ENCODE measurements at regions of chr17 and their contacts with region 1.

Region 1: DNA sequence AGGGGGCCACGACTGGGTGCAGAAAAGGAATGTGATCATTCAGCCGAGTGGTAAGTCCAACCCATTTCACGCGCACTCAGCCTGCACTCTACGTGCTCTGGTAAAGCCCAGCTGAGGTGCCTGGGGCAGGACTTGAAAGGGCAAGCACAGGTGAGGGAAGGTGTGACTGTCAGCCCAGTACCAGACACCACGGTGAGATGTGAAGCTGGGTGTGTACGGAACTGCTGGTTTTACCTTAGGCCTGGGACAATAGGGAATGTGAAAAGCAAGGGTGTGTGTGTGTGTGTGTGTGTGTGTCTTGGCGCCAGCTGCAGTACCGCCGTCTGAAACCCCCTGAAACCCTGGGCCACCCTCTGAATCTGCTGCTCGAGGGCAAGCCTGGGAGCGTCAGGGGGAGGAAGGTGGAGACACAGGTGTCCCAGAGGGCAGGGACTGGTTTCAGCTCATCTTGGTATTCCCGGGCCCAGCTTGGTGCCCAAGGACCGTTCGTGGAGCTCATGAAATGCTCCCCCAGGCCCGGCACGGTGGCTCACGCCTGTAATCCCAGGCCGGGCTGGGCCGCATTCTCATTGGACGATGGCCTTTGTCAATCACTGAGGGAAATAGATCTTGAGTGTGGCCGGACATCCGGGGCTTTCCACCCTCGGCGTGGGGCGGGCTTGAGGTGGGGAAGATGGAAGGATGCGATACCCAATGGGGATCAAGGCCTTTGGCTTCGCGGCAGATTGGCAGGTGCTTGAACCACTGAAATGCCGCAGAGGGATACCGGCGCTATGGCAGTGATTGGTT is 27.8 kb upstream of the ST6GALNAC1 start:
- DNase-seq: peak; percentile 100
- H3K4me3 ChIP-seq: peak overlapping the region; percentile 75
- H3K27ac ChIP-seq: peak overlapping the region; percentile 93
- H3K4me1 ChIP-seq: peaks cover 26% of the 10 kb centered on the region
- H3K27me3 ChIP-seq: no peaks in the 10 kb centered on the region
- CTCF ChIP-seq: no peak

Region 2: GRCh38 chr17:76700617-76701470 is 29.5 kb after region 1 on chr17:
- intact Hi-C with region 1: no loop called
- DNase-seq: peak; percentile 76
- H3K4me3 ChIP-seq: peak overlapping the region; percentile 57
- H3K27ac ChIP-seq: peak overlapping the region; percentile 98
- H3K4me1 ChIP-seq: peaks cover 96% of the 10 kb centered on the region
- H3K27me3 ChIP-seq: no peaks in the 10 kb centered on the region
- CTCF ChIP-seq: no peak

Region 3: DNA sequence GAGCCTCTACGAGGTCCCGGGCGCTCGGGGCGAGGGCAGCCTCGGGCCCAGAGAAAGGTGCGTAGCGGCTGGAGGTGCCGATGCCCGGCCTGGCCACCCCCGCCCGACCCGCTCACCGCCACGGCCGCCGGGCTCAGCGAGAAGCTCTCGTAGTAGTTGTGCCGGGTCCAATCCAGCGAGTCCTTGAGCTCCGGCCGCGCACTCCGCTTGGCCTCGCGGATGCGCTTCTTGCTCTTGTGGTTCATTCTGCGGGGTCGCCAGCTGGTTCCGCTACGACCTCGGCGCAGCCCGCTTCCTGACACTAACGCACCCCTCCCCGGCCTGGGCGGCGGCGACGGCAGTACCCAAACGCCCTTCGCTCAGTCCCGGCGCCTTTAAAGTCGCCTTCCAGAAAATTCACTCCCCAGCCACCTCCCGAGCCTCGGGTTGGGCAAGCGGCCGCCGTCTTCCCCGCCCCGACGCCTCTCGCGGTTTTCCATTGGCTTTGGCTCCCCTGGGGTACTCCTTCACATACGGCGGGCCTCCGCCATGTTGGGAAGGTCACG is 55.0 kb after region 1 on chr17 and contains the start of gene JMJD6:
- intact Hi-C with region 1: loop called (anchors 10 kb)
- DNase-seq: peak; percentile 96
- H3K4me3 ChIP-seq: peak within 1 kb of the TSS; percentile 94
- H3K27ac ChIP-seq: peak within 1 kb of the TSS; percentile 98
- H3K4me1 ChIP-seq: peaks cover 86% of the 10 kb centered on the region
- H3K27me3 ChIP-seq: no peaks in the 10 kb centered on the region
- CTCF ChIP-seq: no peak
- total RNA-seq, gene JMJD6: 65.2 TPM